HEK293 (cell line): ENCODE measurements at regions of chr5 and their contacts with region 1.

Region 1: GRCh38 chr5:45521067-45521466 is 175.1 kb downstream of the HCN1 start:
- H3K4me3 ChIP-seq: no peak overlapping the region
- H3K27ac ChIP-seq: no peak overlapping the region
- H3K4me1 ChIP-seq: no peaks in the 10 kb centered on the region
- CTCF ChIP-seq: no peak

Region 2: DNA sequence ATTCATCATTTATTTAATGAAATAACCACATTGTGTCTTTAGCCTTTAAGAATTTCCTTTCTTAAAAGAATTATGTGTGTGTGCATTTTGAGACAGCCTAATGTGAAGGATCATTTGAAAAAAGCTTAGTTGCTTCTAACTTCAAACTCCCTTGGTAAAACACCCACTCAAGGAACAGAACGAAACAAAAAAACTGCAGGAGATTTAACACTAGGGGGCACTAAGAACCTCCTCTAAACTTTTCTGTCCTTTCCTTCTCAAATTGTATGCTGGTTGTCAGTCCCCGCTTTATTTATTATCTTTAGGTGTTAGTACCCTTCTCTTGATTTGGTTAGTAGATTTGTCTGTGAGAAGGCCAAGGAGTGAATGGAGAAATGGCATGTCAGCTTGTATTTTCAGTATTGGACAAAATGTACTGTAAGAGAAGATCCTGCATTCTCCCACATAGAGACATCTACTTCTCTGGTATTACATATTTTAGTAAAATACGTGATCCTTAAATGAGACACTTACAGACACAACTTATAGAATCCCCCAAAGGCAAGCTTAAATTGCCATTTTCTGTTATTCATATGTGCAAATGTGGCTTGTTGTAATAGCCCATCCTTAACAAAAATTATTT is 482.6 kb before region 1 on chr5:
- CTCF ChIA-PET with region 1: interaction called, 21 read pairs
- POLR2A ChIA-PET with region 1: no interaction called
- H3K4me3 ChIP-seq: no peak overlapping the region
- H3K27ac ChIP-seq: no peak overlapping the region
- H3K4me1 ChIP-seq: no peaks in the 10 kb centered on the region
- CTCF ChIP-seq: no peak

Region 3: GRCh38 chr5:45334939-45335338 is 186.1 kb before region 1 on chr5:
- CTCF ChIA-PET with region 1: no interaction called
- POLR2A ChIA-PET with region 1: no interaction called
- H3K4me3 ChIP-seq: no peak overlapping the region
- H3K27ac ChIP-seq: no peak overlapping the region
- H3K4me1 ChIP-seq: no peaks in the 10 kb centered on the region
- CTCF ChIP-seq: no peak